Thyroid gland (tissue), 4 donors: ENCODE measurements at regions of chr15 and their contacts with region 1.

Region 1: DNA sequence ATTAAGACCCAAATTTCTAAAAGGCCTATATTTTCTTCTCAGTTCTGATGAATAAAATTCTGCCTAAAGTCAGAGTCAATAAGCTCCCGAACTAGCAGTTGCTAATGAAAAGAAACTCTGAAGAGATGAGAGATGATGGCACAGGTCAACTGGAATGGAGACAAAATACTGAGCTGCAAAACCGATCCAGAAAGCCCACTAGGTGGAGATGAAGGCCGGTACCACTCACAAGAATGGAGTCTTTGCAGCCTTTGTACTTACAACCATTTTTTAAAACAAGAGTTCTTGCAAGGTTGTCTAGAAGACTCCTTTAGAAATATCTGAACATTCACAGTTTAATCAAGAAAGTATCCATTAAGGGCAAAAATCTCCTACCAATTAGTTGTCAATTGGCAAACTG is 119.9 kb upstream of the TJP1 start:
- DNase-seq: peak; percentile 11 to 30
- H3K4me3 ChIP-seq: no peak overlapping the region
- H3K27ac ChIP-seq: no peak overlapping the region
- H3K4me1 ChIP-seq: peaks cover 0 to 5% of the 10 kb centered on the region in 2 donors
- H3K27me3 ChIP-seq: no peaks in the 10 kb centered on the region
- CTCF ChIP-seq: peak in 4 of 6 experiments; percentile 30 to 58 (median 48)
- POLR2A ChIP-seq: no peak

Region 2: GRCh38 chr15:29170521-29170920 is 771.6 kb before region 1 on chr15:
- intact Hi-C with region 1: no loop called
- DNase-seq: no peak
- H3K4me3 ChIP-seq: no peak overlapping the region
- H3K27ac ChIP-seq: no peak overlapping the region
- H3K4me1 ChIP-seq: no peaks in the 10 kb centered on the region
- H3K27me3 ChIP-seq: no peaks in the 10 kb centered on the region
- CTCF ChIP-seq: no peak
- POLR2A ChIP-seq: no peak

Region 3: GRCh38 chr15:29870495-29871151 is 71.5 kb before region 1 on chr15:
- intact Hi-C with region 1: no loop called
- DNase-seq: no peak
- H3K4me3 ChIP-seq: no peak overlapping the region
- H3K27ac ChIP-seq: peak overlapping the region in 1 of 3 donors; percentile 21
- H3K4me1 ChIP-seq: no peaks in the 10 kb centered on the region
- H3K27me3 ChIP-seq: no peaks in the 10 kb centered on the region
- CTCF ChIP-seq: no peak
- POLR2A ChIP-seq: no peak

Region 4: GRCh38 chr15:30001602-30002001 is 59.5 kb after region 1 on chr15:
- intact Hi-C with region 1: loop called (anchors 10 kb)
- DNase-seq: no peak
- H3K4me3 ChIP-seq: no peak overlapping the region
- H3K27ac ChIP-seq: no peak overlapping the region
- H3K4me1 ChIP-seq: no peaks in the 10 kb centered on the region
- H3K27me3 ChIP-seq: no peaks in the 10 kb centered on the region
- CTCF ChIP-seq: no peak
- POLR2A ChIP-seq: no peak